Vagina (tissue), 2 donors: ENCODE measurements at regions of chr7 and their contacts with region 1.

Region 1: DNA sequence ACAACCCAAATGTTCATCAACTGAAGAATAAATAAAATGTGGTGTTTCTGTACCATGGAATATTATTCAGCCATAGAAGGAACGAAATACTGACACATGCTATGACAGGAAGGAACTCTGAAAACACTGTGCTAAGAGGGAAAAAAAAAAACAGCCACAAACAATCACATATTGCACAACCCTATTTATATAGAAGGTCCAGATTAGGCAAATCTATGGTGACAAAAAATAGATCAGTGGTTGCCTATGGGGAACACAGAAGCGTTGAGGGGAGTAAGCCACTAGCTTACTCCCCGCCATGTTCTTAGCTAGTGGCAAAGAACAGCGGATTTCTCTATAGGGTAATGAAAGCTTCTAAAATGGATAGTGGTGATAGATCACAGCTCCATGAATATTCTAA is 198.4 kb downstream of the TPST1 start:
- DNase-seq: no peak
- H3K4me3 ChIP-seq: no peak overlapping the region
- H3K27ac ChIP-seq: no peak overlapping the region
- H3K4me1 ChIP-seq: no peaks in the 10 kb centered on the region
- H3K27me3 ChIP-seq: no peaks in the 10 kb centered on the region
- CTCF ChIP-seq: no peak
- POLR2A ChIP-seq: no peak

Region 2: GRCh38 chr7:65037740-65038678 is 1365.6 kb before region 1 on chr7:
- intact Hi-C with region 1: no loop called
- DNase-seq: peak; percentile 91 to 97
- H3K4me3 ChIP-seq: peak overlapping the region; percentile 61 to 65
- H3K27ac ChIP-seq: peak overlapping the region; percentile 77
- H3K4me1 ChIP-seq: peaks cover 17% of the 10 kb centered on the region
- H3K27me3 ChIP-seq: no peaks in the 10 kb centered on the region
- CTCF ChIP-seq: no peak
- POLR2A ChIP-seq: peak in 1 of 2 donors; percentile 38

Region 3: GRCh38 chr7:66187905-66188304 is 215.7 kb before region 1 on chr7:
- intact Hi-C with region 1: no loop called
- DNase-seq: peak in 1 of 2 donors; percentile 92
- H3K4me3 ChIP-seq: no peak overlapping the region
- H3K27ac ChIP-seq: peak overlapping the region; percentile 39
- H3K4me1 ChIP-seq: peaks cover 5% of the 10 kb centered on the region
- H3K27me3 ChIP-seq: no peaks in the 10 kb centered on the region
- CTCF ChIP-seq: no peak
- POLR2A ChIP-seq: no peak

Region 4: GRCh38 chr7:66571568-66571967 is 168.0 kb after region 1 on chr7:
- intact Hi-C with region 1: loop called (anchors 5 kb)
- DNase-seq: no peak
- H3K4me3 ChIP-seq: no peak overlapping the region
- H3K27ac ChIP-seq: no peak overlapping the region
- H3K4me1 ChIP-seq: peaks cover 5% of the 10 kb centered on the region
- H3K27me3 ChIP-seq: no peaks in the 10 kb centered on the region
- CTCF ChIP-seq: no peak
- POLR2A ChIP-seq: no peak

Region 5: DNA sequence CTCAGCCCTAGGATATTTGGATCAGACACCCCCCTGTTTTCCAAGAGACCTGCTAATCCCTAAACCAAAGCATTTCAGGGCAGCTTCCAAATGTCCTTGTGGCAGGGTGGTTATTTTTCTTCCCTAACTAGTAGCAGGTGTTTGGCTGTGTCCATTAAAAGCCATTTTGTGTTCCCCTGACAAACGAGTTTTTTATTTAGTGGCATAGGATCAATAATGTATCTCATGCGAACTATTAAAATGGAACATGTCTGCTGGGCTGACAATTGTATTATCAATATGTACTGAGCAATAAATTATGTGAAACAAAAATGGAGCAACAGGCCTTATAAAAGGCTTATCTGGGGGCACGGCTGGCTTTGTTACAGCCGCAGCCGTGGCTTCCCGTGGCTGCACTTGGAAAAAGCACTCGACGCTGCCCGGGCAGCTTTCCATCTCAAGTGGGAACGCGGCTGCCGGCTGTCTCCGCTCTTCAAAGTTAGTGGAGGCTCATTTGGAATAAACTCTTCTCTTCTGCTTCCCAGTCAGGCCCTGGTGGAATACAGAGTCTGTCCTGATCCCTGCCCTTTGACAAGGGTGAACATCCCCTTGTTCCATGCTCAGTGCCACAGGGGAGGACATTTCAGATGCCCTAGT is 1147.4 kb after region 1 on chr7:
- intact Hi-C with region 1: no loop called
- DNase-seq: no peak
- H3K4me3 ChIP-seq: no peak overlapping the region
- H3K27ac ChIP-seq: no peak overlapping the region
- H3K4me1 ChIP-seq: no peaks in the 10 kb centered on the region
- H3K27me3 ChIP-seq: no peaks in the 10 kb centered on the region
- CTCF ChIP-seq: no peak
- POLR2A ChIP-seq: no peak